Caco-2 (cell line): ENCODE measurements at regions of chr1 and their contacts with region 1.

Region 1: DNA sequence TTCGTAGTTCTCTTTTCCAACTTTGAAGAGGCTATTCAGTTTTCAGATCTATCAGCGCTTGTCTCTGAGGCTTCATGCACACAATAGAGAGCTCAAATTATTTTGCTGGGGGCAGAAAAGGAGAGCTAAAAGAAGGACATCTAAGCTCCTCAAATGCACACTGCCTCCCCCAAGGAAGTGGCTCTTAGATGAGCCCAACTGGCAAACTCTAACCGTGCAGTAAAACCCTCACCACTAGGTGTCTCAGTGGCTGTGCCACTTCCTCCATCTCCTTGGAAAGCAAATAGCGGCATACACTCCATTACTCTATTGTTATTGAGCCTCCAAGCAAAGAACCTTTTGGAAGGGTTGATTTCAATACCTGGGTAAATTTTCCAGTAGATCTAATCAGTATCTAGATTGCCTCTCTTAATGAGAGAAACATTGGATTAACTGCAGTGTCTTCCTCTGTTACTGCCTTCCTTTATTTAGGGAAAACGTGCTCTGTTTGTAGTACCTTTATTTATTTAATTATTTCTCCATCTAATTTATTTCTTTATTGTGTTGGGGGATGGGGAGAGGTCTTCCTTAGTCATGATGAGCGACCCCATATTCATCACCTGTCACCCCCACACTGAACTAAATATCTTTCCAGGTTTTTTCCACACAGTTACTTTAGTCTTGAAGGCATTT is 9.2 kb upstream of the SFPQ start:
- DNase-seq: peak; percentile 57 to 71
- H3K4me3 ChIP-seq: no peak overlapping the region
- H3K4me3 Mint-ChIP-seq: no peak overlapping the region
- H3K27ac Mint-ChIP-seq: no peak overlapping the region
- H3K4me1 ChIP-seq: no peaks in the 10 kb centered on the region
- H3K4me1 Mint-ChIP-seq: no peaks in the 10 kb centered on the region
- H3K27me3 ChIP-seq: no peaks in the 10 kb centered on the region
- H3K27me3 Mint-ChIP-seq: no peaks in the 10 kb centered on the region
- CTCF ChIP-seq: peak; percentile 52 to 73

Region 2: GRCh38 chr1:35180776-35181374 is 21.3 kb before region 1 on chr1:
- CTCF ChIA-PET with region 1: no interaction called
- POLR2A ChIA-PET with region 1: no interaction called
- intact Hi-C with region 1: no loop called
- DNase-seq: no peak
- H3K4me3 ChIP-seq: no peak overlapping the region
- H3K4me3 Mint-ChIP-seq: peak overlapping the region; percentile 54
- H3K27ac Mint-ChIP-seq: no peak overlapping the region
- H3K4me1 ChIP-seq: peaks cover 39% of the 10 kb centered on the region
- H3K4me1 Mint-ChIP-seq: peaks cover 22% of the 10 kb centered on the region
- H3K27me3 ChIP-seq: no peaks in the 10 kb centered on the region
- H3K27me3 Mint-ChIP-seq: no peaks in the 10 kb centered on the region
- CTCF ChIP-seq: no peak

Region 3: GRCh38 chr1:35278886-35279554 is 76.8 kb after region 1 on chr1:
- CTCF ChIA-PET with region 1: no interaction called
- POLR2A ChIA-PET with region 1: no interaction called
- intact Hi-C with region 1: no loop called
- DNase-seq: no peak
- H3K4me3 ChIP-seq: no peak overlapping the region
- H3K4me3 Mint-ChIP-seq: no peak overlapping the region
- H3K27ac Mint-ChIP-seq: no peak overlapping the region
- H3K4me1 ChIP-seq: no peaks in the 10 kb centered on the region
- H3K4me1 Mint-ChIP-seq: no peaks in the 10 kb centered on the region
- H3K27me3 ChIP-seq: no peaks in the 10 kb centered on the region
- H3K27me3 Mint-ChIP-seq: no peaks in the 10 kb centered on the region
- CTCF ChIP-seq: no peak

Region 4: GRCh38 chr1:35298464-35298863 is 96.3 kb after region 1 on chr1:
- CTCF ChIA-PET with region 1: interaction called, 3 read pairs
- POLR2A ChIA-PET with region 1: no interaction called
- intact Hi-C with region 1: loop called (anchors 1 kb)
- DNase-seq: peak in 1 of 2 experiments; percentile 14
- H3K4me3 ChIP-seq: no peak overlapping the region
- H3K4me3 Mint-ChIP-seq: no peak overlapping the region
- H3K27ac Mint-ChIP-seq: no peak overlapping the region
- H3K4me1 ChIP-seq: no peaks in the 10 kb centered on the region
- H3K4me1 Mint-ChIP-seq: peaks cover 6% of the 10 kb centered on the region
- H3K27me3 ChIP-seq: no peaks in the 10 kb centered on the region
- H3K27me3 Mint-ChIP-seq: no peaks in the 10 kb centered on the region
- CTCF ChIP-seq: peak in 1 of 2 experiments; percentile 19

Region 5: GRCh38 chr1:35426097-35426586 is 224.0 kb after region 1 on chr1:
- CTCF ChIA-PET with region 1: no interaction called
- POLR2A ChIA-PET with region 1: no interaction called
- intact Hi-C with region 1: loop called (anchors 10 kb)
- DNase-seq: no peak
- H3K4me3 ChIP-seq: no peak overlapping the region
- H3K4me3 Mint-ChIP-seq: no peak overlapping the region
- H3K27ac Mint-ChIP-seq: peak overlapping the region; percentile 13
- H3K4me1 ChIP-seq: no peaks in the 10 kb centered on the region
- H3K4me1 Mint-ChIP-seq: peaks cover 6% of the 10 kb centered on the region
- H3K27me3 ChIP-seq: no peaks in the 10 kb centered on the region
- H3K27me3 Mint-ChIP-seq: no peaks in the 10 kb centered on the region
- CTCF ChIP-seq: no peak

Region 6: DNA sequence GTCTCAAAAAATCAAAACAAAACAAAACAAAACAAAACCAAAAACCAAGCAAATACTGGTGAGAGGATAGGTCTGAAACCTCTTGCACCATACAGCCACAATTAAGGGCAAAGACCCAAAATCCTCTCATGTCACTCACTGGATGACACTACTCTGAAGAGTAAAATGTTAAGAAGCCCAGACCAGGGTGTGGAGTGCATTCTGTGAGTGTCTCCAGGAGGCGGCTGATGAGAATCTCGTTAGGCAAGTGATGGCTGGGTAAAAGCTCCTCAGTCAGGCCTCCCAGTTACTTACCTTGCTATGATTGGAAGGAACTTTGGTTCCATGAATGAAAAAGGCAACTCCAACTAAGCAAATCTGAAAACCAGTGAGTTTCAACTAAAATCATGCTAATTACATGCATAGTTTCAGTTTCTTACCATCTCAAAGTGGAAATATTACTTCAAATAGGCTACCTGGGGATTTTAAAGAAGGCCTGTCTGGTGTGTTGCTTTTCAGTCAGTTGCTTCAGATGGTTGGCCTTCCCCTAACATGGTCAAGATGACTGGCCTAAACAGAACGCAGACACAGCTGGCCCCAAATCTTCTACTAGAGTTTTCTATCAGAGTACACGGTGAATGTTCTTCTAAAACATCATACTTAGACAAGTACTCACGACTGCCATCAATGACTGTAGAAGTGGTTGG is 259.9 kb after region 1 on chr1:
- CTCF ChIA-PET with region 1: no interaction called
- POLR2A ChIA-PET with region 1: no interaction called
- intact Hi-C with region 1: no loop called
- DNase-seq: no peak
- H3K4me3 ChIP-seq: no peak overlapping the region
- H3K4me3 Mint-ChIP-seq: no peak overlapping the region
- H3K27ac Mint-ChIP-seq: no peak overlapping the region
- H3K4me1 ChIP-seq: no peaks in the 10 kb centered on the region
- H3K4me1 Mint-ChIP-seq: no peaks in the 10 kb centered on the region
- H3K27me3 ChIP-seq: no peaks in the 10 kb centered on the region
- H3K27me3 Mint-ChIP-seq: no peaks in the 10 kb centered on the region
- CTCF ChIP-seq: no peak

Region 7: GRCh38 chr1:35544978-35545377 is 342.8 kb after region 1 on chr1:
- CTCF ChIA-PET with region 1: no interaction called
- POLR2A ChIA-PET with region 1: no interaction called
- intact Hi-C with region 1: loop called (anchors 1 kb)
- DNase-seq: peak; percentile 56 to 66
- H3K4me3 ChIP-seq: no peak overlapping the region
- H3K4me3 Mint-ChIP-seq: no peak overlapping the region
- H3K27ac Mint-ChIP-seq: no peak overlapping the region
- H3K4me1 ChIP-seq: no peaks in the 10 kb centered on the region
- H3K4me1 Mint-ChIP-seq: peaks cover 8% of the 10 kb centered on the region
- H3K27me3 ChIP-seq: no peaks in the 10 kb centered on the region
- H3K27me3 Mint-ChIP-seq: no peaks in the 10 kb centered on the region
- CTCF ChIP-seq: peak; percentile 37 to 60